ENCODE measurements at regions of chr14 and their contacts with region 1.

Region 1: DNA sequence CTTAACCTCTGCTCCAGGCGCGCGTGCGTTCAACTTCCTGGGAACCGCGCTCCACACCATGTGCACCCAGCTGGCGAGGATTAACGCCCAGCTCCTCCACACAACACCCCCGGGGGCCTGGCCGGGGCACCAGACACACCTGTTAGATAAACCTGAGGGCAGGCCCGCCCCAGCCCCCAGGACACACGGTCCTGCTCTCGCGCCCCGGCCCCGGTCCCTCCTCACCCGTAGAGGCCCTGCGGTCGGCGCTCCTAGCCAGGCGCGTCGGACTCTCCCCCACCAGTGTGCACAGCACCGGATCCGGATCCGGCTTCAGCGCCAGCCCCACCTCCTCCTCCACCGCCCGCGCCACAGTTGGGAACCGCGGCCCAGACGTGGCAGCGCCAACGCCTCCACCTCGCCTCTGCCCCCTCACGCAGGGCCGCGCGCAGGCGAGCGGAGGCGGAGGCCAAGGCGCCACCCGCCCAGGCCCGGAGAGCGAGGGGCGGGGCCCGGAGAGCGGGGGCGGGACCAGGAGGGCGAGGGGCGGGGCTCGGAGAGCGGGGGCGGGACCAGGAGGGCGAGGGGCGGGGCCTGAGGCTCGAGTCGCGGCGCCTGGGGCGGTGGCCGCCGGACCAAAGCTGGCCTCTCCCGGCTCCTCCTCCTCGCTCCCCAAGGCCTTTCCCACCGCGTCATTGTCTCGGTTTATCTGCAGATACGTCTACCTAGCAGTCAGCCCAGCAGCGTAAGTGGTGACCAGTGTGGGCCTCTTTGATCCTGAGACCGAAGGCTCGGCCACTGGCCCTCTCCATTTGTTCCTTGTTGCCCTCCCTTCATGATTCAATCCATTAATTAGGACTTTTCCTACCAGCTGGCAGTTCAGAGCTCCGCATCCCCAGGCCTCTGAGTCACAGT is at the start of gene GNPNAT1:
- DNase-seq: peak; percentile 85 to 92 (median 89)
- ATAC-seq: peak; percentile 98
- H3K4me3 ChIP-seq: peak within 1 kb of the TSS; percentile 87
- H3K4me3 Mint-ChIP-seq: peak within 1 kb of the TSS; percentile 86 to 94 (median 93)
- H3K27ac ChIP-seq: peak within 1 kb of the TSS; percentile 74
- H3K27ac Mint-ChIP-seq: peak within 1 kb of the TSS; percentile 75 to 96 (median 89)
- H3K4me1 ChIP-seq: peaks cover 15 to 18% of the 10 kb centered on the region in 2 donors
- H3K4me1 Mint-ChIP-seq: peaks cover 23 to 48% (median 44%) of the 10 kb centered on the region in 7 donors
- H3K27me3 ChIP-seq: no peaks in the 10 kb centered on the region
- H3K27me3 Mint-ChIP-seq: no peaks in the 10 kb centered on the region
- total RNA-seq, gene GNPNAT1: 4.6 to 14.7 (median 8.5) TPM

Region 2: GRCh38 chr14:51744372-51745130 is 1046.9 kb before region 1 on chr14:
- CTCF ChIA-PET with region 1: no interaction called
- POLR2A ChIA-PET with region 1: no interaction called
- intact Hi-C with region 1: loop called in 1 of 2 experiments (anchors 10 kb)
- DNase-seq: no peak
- ATAC-seq: no peak
- H3K4me3 ChIP-seq: no peak overlapping the region
- H3K4me3 Mint-ChIP-seq: no peak overlapping the region
- H3K27ac ChIP-seq: no peak overlapping the region
- H3K27ac Mint-ChIP-seq: no peak overlapping the region
- H3K4me1 ChIP-seq: no peaks in the 10 kb centered on the region
- H3K4me1 Mint-ChIP-seq: peaks cover 0 to 1% (median 0%) of the 10 kb centered on the region in 7 donors
- H3K27me3 ChIP-seq: no peaks in the 10 kb centered on the region
- H3K27me3 Mint-ChIP-seq: peaks cover 0 to 6% (median 3%) of the 10 kb centered on the region in 5 donors

Region 3: GRCh38 chr14:52695481-52696091 is 95.9 kb before region 1 on chr14 and contains the start of gene ERO1A:
- CTCF ChIA-PET with region 1: no interaction called
- POLR2A ChIA-PET with region 1: interaction called, 6 read pairs
- intact Hi-C with region 1: loop called in 1 of 2 experiments (anchors 1 kb)
- DNase-seq: peak; percentile 26 to 83 (median 53)
- ATAC-seq: peak; percentile 82
- H3K4me3 ChIP-seq: peak within 1 kb of the TSS; percentile 79
- H3K4me3 Mint-ChIP-seq: peak within 1 kb of the TSS; percentile 95 to 99 (median 99)
- H3K27ac ChIP-seq: peak within 1 kb of the TSS; percentile 85
- H3K27ac Mint-ChIP-seq: peak within 1 kb of the TSS; percentile 94 to 99 (median 98)
- H3K4me1 ChIP-seq: peaks cover 26 to 27% of the 10 kb centered on the region in 2 donors
- H3K4me1 Mint-ChIP-seq: peaks cover 32 to 47% (median 42%) of the 10 kb centered on the region in 7 donors
- H3K27me3 ChIP-seq: no peaks in the 10 kb centered on the region
- H3K27me3 Mint-ChIP-seq: no peaks in the 10 kb centered on the region
- total RNA-seq, gene ERO1A: 65.3 to 201 (median 68.7) TPM

Region 4: DNA sequence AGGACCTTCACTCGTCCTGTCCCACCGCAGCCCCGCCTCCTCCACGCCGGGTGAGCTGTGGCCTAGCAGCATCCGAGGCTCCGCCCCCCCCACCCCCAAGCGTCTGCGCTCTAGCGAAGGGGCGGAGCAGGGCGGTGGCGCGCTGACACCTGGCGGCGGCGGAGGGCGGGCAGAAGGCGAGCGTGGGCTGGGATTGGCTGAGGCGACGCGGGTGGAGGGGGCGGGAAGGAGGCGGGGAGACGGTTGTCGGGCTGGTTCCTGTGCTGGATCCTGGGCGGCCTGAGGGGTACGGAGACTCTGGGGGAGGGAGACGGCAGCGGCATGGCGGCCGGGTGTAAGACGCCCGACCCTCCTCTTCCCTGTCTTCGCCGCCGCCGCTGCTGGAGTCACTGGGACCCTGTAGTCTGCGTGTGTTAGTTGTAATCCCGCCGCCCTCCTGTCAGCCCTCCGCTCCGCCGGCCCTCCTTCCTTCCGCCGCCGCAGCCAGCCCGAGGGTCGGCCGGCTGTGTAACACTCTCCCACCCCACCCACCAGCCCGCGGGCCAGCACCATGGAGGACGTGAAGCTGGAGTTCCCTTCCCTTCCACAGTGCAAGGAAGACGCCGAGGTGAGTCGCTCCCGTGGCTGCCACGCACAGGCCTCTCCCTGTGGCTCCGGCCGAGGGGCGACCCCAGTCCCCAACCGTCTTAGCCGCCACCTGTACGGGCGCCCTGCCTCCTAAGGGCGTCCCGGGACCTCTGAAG is 61.4 kb before region 1 on chr14 and contains the start of gene STYX:
- CTCF ChIA-PET with region 1: no interaction called
- POLR2A ChIA-PET with region 1: interaction called, 5 read pairs
- intact Hi-C with region 1: loop called (anchors 1 kb)
- DNase-seq: peak; percentile 91 to 97 (median 94)
- ATAC-seq: peak; percentile 99
- H3K4me3 ChIP-seq: peak within 1 kb of the TSS; percentile 88
- H3K4me3 Mint-ChIP-seq: peak within 1 kb of the TSS; percentile 87 to 95 (median 94)
- H3K27ac ChIP-seq: peak within 1 kb of the TSS; percentile 94
- H3K27ac Mint-ChIP-seq: peak within 1 kb of the TSS; percentile 84 to 97 (median 89)
- H3K4me1 ChIP-seq: peaks cover 14 to 16% of the 10 kb centered on the region in 2 donors
- H3K4me1 Mint-ChIP-seq: peaks cover 18 to 40% (median 33%) of the 10 kb centered on the region in 7 donors
- H3K27me3 ChIP-seq: no peaks in the 10 kb centered on the region
- H3K27me3 Mint-ChIP-seq: no peaks in the 10 kb centered on the region
- total RNA-seq, gene STYX: 23.9 to 45.3 (median 29.2) TPM

Region 5: DNA sequence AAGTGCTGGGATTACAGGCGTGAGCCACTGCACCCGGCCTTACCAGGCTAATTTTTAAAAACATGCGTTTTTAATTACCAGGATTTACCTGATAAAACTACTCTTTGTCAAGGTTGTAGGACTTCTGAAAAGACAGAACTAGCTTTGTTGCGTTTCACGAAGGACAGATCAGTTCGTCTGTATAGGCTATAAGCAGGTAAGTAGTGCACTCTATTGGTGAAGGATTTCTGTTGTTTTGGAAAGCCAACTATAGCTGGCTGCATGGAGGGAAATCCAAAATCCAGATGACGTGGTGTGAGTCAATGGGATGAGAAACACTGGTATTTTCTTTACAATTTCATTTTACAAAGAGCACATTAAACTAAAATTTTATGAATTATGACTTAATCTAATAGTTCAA is 14.6 kb before region 1 on chr14:
- CTCF ChIA-PET with region 1: interaction called, 4 read pairs
- POLR2A ChIA-PET with region 1: no interaction called
- intact Hi-C with region 1: loop called in 1 of 2 experiments (anchors 1 kb)
- DNase-seq: peak in 3 of 9 donors; percentile 35 to 39 (median 36)
- ATAC-seq: no peak
- H3K4me3 ChIP-seq: no peak overlapping the region
- H3K4me3 Mint-ChIP-seq: no peak overlapping the region
- H3K27ac ChIP-seq: no peak overlapping the region
- H3K27ac Mint-ChIP-seq: peak overlapping the region in 4 of 9 donors; percentile 13 to 59 (median 30)
- H3K4me1 ChIP-seq: no peaks in the 10 kb centered on the region
- H3K4me1 Mint-ChIP-seq: peaks cover 0 to 11% (median 0%) of the 10 kb centered on the region in 7 donors
- H3K27me3 ChIP-seq: no peaks in the 10 kb centered on the region
- H3K27me3 Mint-ChIP-seq: no peaks in the 10 kb centered on the region

Region 6: GRCh38 chr14:54396493-54397335 is 1605.3 kb after region 1 on chr14 and contains the start of gene CDKN3:
- CTCF ChIA-PET with region 1: no interaction called
- POLR2A ChIA-PET with region 1: no interaction called
- intact Hi-C with region 1: loop called in 1 of 2 experiments (anchors 2 kb)
- DNase-seq: peak; percentile 91 to 96 (median 95)
- ATAC-seq: peak; percentile 98
- H3K4me3 ChIP-seq: peak within 1 kb of the TSS; percentile 85
- H3K4me3 Mint-ChIP-seq: peak within 1 kb of the TSS; percentile 81 to 96 (median 90)
- H3K27ac ChIP-seq: peak within 1 kb of the TSS; percentile 46
- H3K27ac Mint-ChIP-seq: peak within 1 kb of the TSS; percentile 24 to 93 (median 83)
- H3K4me1 ChIP-seq: peaks cover 0 to 9% of the 10 kb centered on the region in 2 donors
- H3K4me1 Mint-ChIP-seq: peaks cover 0 to 38% (median 12%) of the 10 kb centered on the region in 7 donors
- H3K27me3 ChIP-seq: no peaks in the 10 kb centered on the region
- H3K27me3 Mint-ChIP-seq: peaks cover 0 to 2% (median 0%) of the 10 kb centered on the region in 5 donors
- total RNA-seq, gene CDKN3: 0.93 to 48.1 (median 3.0) TPM

Measured in naive thymus-derived CD4-positive, alpha-beta T cell (primary cell).